GM13976 (cell line): ENCODE measurements at regions of chr17 and their contacts with region 1.

Region 1: GRCh38 chr17:41530062-41531051 is 2.2 kb upstream of the KRT19 start:
- DNase-seq: no peak
- CTCF ChIP-seq: no peak

Region 2: DNA sequence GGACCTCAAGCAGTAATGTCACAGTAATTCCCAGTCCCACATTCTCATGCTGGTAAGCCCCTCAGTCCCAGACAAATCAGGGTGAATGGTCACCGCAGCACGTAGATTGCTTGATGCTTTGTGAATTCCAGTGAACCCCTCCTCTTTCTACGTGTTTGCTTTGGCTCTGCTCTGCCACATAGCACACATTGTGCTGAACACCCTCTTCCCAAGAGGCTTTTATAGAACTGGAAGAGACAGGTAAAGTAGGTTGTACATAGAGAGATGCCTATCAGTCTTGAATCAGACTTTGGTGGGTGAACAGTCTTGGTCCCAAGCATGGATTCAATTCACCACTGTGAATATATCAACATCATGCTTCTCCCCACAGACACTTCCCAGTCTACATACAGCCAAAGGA is 265.8 kb before region 1 on chr17:
- in situ Hi-C with region 1: no loop called
- DNase-seq: peak; percentile 0
- CTCF ChIP-seq: no peak

Region 3: GRCh38 chr17:41474863-41475262 is 55.5 kb before region 1 on chr17:
- in situ Hi-C with region 1: loop called (anchors 10 kb)
- DNase-seq: no peak
- CTCF ChIP-seq: no peak

Region 4: DNA sequence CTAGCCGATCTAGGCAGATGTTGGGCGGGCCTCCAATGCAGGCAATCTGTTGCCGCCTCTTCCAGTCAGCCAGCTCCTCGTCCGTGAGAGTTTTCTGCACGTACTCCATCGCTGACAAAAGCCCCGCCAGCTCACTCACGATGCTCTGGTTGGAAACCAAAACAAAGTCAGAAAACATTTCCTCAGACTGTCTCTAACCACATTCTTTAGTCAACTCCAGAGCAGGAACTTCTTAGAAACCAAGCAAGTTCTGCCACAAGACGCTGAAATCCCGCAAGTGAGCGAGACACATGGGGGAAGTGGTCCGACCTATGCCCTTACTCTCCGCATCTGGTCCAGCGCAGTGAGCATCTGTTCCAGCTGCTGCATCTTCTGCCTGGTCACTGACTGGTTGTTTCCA is 807.1 kb after region 1 on chr17:
- in situ Hi-C with region 1: no loop called
- DNase-seq: peak; percentile 75
- CTCF ChIP-seq: no peak